ENCODE measurements at regions of chr1 and their contacts with region 1.

Region 1: DNA sequence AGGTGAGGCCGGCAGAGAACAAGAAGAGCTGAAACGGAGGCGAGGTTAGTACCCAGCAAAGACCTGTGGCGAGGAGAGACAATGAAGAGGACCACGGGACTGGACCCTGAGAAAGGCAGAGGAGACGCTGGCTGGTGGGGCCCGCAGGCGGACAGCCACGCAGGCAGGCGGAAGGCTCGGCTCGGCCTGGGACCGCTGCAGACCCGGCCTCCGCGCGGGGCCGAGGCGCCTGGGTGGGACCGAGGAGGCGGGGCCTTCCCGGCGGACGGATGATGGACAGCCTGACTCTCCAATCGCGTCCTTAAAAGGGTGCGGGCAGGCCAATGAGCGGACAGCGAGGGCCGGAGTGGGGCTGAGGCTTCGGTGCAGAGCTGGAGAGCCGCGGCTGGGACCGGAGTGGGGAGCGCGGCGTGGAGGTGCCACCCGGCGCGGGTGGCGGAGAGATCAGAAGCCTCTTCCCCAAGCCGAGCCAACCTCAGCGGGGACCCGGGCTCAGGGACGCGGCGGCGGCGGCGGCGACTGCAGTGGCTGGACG is at the start of gene MPZL1:
- DNase-seq: peak; percentile 88 to 99 (median 97)

Region 2: GRCh38 chr1:167650269-167651160 is 71.2 kb before region 1 on chr1:
- intact Hi-C with region 1: no loop called
- DNase-seq: peak in 1 of 42 donors; percentile 44

Region 3: DNA sequence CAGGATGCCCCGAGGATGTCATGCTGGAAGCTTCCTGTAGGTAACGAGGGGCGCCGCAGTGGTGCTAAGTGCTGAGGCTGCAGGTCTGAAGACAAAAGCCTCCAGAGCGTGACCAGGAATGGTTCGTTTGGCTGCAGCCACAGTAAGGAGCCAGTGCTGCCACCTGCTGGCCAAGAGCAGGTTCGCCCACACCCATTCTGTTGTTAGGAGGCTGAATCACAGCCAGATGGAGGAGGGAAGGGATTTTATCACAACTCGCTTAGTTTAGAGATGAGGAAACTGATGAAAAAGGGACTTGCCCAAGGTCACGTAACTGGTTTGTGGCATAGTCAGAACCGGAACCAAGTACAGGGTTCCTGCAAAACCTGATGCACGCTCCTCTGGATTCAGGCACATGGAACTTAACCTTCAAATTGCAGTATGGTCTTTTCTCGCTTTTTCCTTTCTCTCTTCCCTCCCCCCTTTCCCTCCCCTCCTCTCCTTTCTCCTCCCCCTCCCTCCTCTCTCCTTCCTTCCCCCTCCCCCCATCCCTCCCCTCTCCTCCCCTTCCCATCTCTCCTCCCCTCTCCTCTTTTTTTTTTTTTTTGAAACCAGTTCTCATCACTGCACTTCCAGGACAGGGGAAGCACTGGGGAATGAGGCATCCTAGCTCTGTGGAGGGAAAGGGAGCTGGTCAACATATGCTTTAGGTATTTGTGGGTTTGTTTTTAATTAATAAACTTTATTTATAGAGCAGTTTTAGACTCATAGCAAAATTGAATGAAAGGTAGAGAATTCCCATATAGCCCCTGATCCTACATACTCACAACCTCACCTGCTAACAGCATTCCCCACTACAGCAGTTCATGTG is 81.9 kb after region 1 on chr1:
- intact Hi-C with region 1: loop called (anchors 5 kb)
- DNase-seq: peak; percentile 79 to 96 (median 92)